Aorta (tissue), 5 donors: ENCODE measurements at regions of chr5 and their contacts with region 1.

Region 1: DNA sequence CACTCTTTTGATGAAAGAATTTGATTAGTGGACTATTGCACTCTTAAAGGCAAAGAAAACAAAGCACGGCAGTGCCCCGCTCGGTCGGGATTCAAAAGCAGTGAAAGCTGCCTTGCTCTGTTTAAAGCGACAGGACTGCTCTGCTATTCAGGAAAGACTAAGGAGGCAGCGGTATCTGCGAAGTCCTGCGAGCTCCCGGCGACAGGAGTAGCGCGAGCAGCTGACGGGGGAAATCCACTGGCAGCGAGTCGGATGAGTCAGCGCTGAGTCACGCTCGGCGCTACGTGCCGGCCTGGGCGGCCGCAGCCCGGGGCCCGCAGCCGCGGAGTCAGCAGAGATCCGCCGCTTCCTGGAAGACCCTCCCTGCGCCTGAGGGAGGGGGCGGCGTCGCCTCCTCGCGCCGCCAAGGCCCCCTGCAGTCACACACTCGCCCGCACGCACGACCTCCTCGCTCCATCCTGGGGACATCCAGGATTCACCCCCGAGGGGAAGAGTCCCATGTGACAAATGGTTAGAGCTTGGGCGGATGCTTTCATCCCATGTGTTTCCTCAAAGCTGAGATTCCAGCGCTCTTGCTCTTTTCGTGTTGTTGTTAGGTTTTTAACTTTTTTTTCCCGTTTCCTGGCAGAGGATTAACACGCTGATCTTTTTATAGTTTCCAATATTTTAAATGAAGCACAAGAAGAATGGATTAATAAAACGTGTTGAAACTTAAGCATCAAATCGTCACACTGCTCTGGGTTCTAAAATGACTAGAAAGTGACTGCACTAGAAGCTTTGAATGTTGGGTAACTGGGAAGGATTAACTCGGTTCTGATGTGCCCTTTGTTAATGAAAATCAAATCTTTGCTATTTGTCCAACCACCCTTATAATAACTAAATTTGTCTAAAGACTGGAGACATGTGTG is 102.5 kb downstream of the ARRDC3 start:
- DNase-seq: peak; percentile 97 to 99
- ATAC-seq: peak; percentile 99
- H3K4me3 ChIP-seq: peak overlapping the region; percentile 37 to 76
- H3K27ac ChIP-seq: peak overlapping the region; percentile 23 to 97
- H3K4me1 ChIP-seq: no peaks in the 10 kb centered on the region
- H3K27me3 ChIP-seq: no peaks in the 10 kb centered on the region

Region 2: GRCh38 chr5:91110686-91111085 is 169.9 kb before region 1 on chr5:
- intact Hi-C with region 1: loop called (anchors 10 kb)
- DNase-seq: no peak
- ATAC-seq: no peak
- H3K4me3 ChIP-seq: no peak overlapping the region
- H3K27ac ChIP-seq: no peak overlapping the region
- H3K4me1 ChIP-seq: peaks cover 0 to 2% of the 10 kb centered on the region in 2 donors
- H3K27me3 ChIP-seq: no peaks in the 10 kb centered on the region

Region 3: GRCh38 chr5:91307048-91307447 is 26.4 kb after region 1 on chr5:
- intact Hi-C with region 1: no loop called
- DNase-seq: peak in 1 of 2 donors; percentile 81
- ATAC-seq: peak; percentile 76
- H3K4me3 ChIP-seq: no peak overlapping the region
- H3K27ac ChIP-seq: no peak overlapping the region
- H3K4me1 ChIP-seq: no peaks in the 10 kb centered on the region
- H3K27me3 ChIP-seq: no peaks in the 10 kb centered on the region